ENCODE measurements at regions of chr19 and their contacts with region 1.

Region 1: DNA sequence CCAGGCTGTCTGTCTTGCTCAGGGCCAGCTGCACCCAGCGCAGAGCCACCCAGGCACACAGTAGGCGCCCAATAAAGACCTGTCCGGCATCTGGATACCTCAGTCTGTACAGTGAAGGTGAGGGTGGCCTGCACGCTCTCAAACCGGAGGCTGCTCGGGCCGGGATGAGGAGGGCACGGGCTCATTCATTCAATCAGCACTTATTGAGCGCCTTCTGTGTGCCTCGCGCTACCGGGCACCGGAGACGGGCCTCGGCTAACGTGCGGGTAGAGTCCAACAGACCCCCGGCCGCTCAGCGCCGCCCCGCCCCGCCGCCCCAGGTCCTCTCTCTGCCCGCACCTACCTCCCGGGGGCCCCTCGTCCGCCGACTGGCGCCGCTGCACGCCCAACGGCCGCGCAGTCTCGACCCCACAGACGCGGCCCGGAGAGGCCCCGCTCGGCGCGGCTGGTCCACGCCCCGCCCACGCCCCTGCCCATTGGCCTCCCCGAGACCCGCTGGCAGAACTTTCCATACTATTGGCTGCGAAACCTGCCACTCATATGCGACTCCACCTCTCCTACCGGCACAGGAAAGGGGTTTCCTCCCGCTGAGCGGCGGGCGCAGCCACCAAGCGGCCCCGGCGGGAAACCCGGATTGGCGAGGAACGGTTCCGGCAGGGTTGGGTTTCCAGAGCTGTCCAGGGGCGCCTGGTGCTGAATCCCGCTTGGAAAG is at the start of gene SLC39A3:
- DNase-seq: peak; percentile 99
- ATAC-seq: peak; percentile 100
- H3K4me3 Mint-ChIP-seq: peak within 1 kb of the TSS; percentile 98
- H3K27ac Mint-ChIP-seq: peak within 1 kb of the TSS; percentile 82
- H3K4me1 Mint-ChIP-seq: peaks cover 21% of the 10 kb centered on the region
- H3K27me3 Mint-ChIP-seq: peaks cover 5% of the 10 kb centered on the region
- CTCF ChIP-seq: no peak
- total RNA-seq, gene SLC39A3: 35.5 to 38.1 TPM

Region 2: DNA sequence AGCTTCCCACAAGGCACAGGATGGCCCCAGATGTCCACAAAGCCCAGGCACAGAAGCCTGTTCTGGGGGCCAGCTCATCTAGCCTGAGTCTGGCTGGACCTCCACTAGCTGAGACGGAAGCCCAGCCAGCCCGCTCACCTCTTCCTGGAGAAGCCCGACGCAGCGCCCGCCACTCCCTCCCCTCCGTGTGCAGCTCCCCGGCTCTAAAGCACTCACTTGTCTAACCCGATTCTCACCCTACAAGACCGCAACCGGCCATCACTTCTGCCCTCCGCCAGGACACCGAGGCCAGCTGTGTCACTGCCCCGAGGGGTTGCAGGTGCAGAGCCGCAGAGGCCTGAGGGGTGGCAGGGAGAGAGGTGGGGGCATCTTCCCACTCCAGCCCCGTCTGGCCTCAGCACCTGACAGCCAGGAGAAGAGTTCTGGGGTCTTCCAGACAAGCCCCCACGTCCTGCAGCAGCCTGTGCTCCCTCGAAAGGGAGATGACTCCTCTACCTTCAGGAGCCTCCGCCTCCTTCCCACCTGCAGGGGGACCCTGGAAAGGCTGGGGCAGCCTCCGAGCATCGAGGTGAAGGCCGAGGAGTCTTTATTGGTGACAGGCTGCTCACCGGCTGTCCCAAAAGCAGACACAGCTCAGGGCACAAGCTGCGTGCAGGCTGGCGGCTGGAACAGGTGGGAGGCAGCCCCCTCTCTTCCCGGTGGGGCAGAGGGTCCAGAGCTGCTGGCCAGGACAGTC is 12.7 kb before region 1 on chr19:
- CTCF ChIA-PET with region 1: interaction called, 3 read pairs
- POLR2A ChIA-PET with region 1: interaction called, 10 read pairs
- intact Hi-C with region 1: no loop called
- DNase-seq: no peak
- ATAC-seq: no peak
- H3K4me3 Mint-ChIP-seq: no peak overlapping the region
- H3K27ac Mint-ChIP-seq: no peak overlapping the region
- H3K4me1 Mint-ChIP-seq: no peaks in the 10 kb centered on the region
- H3K27me3 Mint-ChIP-seq: peaks cover 17% of the 10 kb centered on the region
- CTCF ChIP-seq: no peak

Measured in activated CD8-positive, alpha-beta T cell treated with anti-CD3 and anti-CD28 coated beads for 36 hours (primary cell).